Esophagus muscularis mucosa (tissue), 4 donors: ENCODE measurements at regions of chr17 and their contacts with region 1.

Region 1: DNA sequence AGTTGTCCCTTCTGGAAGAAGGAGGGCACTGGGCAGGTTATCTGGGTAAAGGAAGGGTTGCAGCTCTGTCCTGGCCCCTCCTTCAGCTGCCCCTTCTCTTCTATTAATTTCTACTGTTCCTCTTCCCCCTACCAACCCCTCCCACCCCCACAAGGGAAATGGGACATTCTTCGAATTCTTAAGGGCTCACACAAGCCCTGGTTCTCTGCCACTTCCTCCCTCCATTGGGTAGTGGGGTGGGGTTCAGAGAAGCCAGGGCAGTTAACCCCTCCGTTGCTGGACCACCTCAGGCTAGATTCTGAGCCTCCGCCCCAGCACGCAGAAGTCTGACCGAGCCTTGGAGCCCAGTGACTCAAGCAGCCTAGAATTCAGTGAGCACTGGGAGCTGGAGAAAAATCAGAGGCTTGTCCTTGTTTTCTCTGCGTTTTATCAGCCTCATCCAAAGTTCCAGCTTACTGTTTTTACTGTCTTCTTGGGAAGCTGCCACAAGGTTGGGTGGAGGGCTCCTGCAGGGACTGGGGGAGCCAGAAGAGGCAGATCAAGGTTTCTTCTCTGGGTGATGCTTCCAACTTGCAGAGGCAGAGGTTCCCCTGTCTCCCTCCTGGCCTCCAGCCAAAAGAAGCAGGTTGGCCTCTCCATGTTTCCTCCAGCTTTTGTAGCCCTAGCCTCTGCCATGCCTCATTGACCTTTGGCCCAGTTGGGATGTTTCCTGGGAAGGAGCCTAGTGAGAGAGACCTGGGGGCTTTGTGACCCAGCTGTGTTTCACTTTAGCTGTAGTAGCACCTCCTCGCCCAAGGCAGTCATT is 10.2 kb downstream of the LASP1 start:
- DNase-seq: no peak
- H3K4me3 ChIP-seq: peak overlapping the region in 3 of 4 donors; percentile 1 to 27 (median 7)
- H3K27ac ChIP-seq: peak overlapping the region; percentile 58 to 76 (median 70)
- H3K4me1 ChIP-seq: peaks cover 87 to 100% (median 98%) of the 10 kb centered on the region in 4 donors
- H3K27me3 ChIP-seq: no peaks in the 10 kb centered on the region
- CTCF ChIP-seq: no peak
- EP300 ChIP-seq: no peak
- POLR2A ChIP-seq: no peak

Region 2: DNA sequence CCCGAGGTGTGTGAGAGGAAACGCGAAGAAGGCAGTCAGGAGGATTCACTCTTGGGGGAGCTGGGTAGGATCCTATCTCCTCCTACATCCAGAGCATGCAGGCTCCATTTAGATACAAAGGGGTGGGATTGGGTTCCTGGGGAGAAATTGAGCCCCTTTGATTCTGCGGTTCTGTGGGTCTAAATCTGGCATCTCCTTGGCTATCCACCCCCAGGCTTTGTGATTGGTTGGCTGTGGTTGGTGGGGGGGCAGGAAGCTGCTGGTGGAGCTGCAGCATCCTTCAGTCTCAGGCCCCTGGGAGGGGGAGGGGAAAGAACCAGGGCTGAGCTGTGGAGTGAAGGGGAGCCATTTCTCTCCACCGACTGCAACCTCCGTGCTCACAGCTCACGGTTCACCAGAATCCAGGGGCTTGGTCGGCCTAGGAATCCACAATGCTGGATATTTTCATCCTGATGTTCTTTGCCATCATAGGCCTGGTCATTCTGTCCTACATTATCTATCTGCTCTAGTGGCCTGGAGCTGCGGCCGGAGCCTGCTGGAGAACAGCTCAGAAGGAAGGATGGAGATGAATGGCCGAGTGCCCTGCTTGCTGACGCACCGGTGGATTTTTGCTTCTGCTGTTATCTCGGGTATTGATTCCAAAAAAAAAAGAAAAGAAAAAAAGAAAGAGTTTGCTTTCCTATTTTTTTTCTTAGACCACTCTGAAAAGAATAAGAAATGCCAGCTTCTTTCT is 45.3 kb after region 1 on chr17 and contains the start of gene LASP1NB:
- intact Hi-C with region 1: loop called (anchors 5 kb)
- DNase-seq: peak; percentile 55
- H3K4me3 ChIP-seq: peak within 1 kb of the TSS in 2 of 4 donors; percentile 21 to 34
- H3K27ac ChIP-seq: peak within 1 kb of the TSS; percentile 0 to 62 (median 47)
- H3K4me1 ChIP-seq: peaks cover 40 to 58% (median 53%) of the 10 kb centered on the region in 4 donors
- H3K27me3 ChIP-seq: no peaks in the 10 kb centered on the region
- CTCF ChIP-seq: no peak
- EP300 ChIP-seq: no peak
- POLR2A ChIP-seq: no peak

Region 3: GRCh38 chr17:39018267-39019134 is 138.4 kb after region 1 on chr17:
- intact Hi-C with region 1: no loop called
- DNase-seq: no peak
- H3K4me3 ChIP-seq: no peak overlapping the region
- H3K27ac ChIP-seq: peak overlapping the region in 1 of 4 donors; percentile 23
- H3K4me1 ChIP-seq: peaks cover 0 to 18% (median 14%) of the 10 kb centered on the region in 4 donors
- H3K27me3 ChIP-seq: no peaks in the 10 kb centered on the region
- CTCF ChIP-seq: no peak
- EP300 ChIP-seq: no peak
- POLR2A ChIP-seq: no peak